A549 (cell line): ENCODE measurements at regions of chr19 and their contacts with region 1.

Region 1: DNA sequence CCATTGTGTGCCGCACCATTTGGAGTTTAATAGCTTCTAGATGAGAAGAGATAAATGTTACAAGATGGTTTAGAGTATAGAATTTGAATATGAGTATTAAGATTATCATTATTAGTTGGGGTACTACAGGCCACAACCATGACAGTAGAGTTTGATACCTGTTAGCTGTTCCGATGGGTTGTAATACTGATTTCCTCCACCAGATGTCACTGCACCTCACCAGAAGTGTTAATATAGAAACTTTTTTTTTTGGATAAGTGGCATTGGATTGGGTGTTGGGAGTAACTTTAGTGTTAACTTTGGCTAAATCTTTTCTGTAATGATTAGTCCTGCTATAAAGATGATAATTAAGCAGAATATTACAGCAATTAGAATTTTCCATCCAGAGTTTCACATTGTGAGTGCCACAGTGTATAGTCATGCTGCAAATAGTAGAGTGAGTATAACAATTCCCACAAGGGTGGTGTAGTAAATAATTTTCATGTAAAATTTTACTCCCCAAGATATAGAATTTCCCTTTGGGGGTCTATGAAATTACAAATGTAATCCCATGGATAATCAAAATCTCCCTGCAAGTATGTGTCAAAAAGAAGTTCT is 56.3 kb downstream of the PSG3 start:
- DNase-seq: peak; percentile 54 to 63
- ATAC-seq: peak in 1 of 2 experiments; percentile 70; a peak in 3 of 6 replicates
- H3K4me3 ChIP-seq: no peak overlapping the region
- H3K27ac ChIP-seq: no peak overlapping the region
- H3K4me1 ChIP-seq: no peaks in the 10 kb centered on the region
- CTCF ChIP-seq: peak; percentile 88
- EP300 ChIP-seq: no peak
- POLR2A ChIP-seq: no peak
- RAD21 ChIP-seq: peak; percentile 64 to 79

Region 2: DNA sequence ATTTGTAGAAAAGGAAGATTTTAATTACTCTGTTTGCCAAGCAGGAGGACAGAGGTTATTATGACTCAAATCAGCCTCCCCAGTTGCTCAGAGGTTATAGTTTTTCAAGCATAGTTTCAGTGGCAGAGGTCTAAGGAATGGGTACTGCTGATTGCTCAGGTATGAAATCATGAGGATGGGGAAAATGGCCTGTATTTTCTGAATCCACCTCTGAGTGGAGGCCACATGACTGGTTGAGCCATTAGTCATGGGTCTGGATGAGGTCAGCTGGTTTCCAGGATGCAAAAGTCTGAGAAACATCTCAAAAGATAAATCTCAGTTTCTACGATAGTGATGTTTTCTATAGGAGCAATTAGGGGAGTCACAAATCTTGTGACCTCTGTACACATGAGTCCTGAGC is 26.5 kb before region 1 on chr19:
- CTCF ChIA-PET with region 1: interaction called, 13 read pairs
- POLR2A ChIA-PET with region 1: no interaction called
- DNase-seq: no peak
- ATAC-seq: no peak
- H3K4me3 ChIP-seq: no peak overlapping the region
- H3K27ac ChIP-seq: no peak overlapping the region
- H3K4me1 ChIP-seq: no peaks in the 10 kb centered on the region
- CTCF ChIP-seq: no peak
- EP300 ChIP-seq: no peak
- POLR2A ChIP-seq: no peak
- RAD21 ChIP-seq: no peak

Region 3: DNA sequence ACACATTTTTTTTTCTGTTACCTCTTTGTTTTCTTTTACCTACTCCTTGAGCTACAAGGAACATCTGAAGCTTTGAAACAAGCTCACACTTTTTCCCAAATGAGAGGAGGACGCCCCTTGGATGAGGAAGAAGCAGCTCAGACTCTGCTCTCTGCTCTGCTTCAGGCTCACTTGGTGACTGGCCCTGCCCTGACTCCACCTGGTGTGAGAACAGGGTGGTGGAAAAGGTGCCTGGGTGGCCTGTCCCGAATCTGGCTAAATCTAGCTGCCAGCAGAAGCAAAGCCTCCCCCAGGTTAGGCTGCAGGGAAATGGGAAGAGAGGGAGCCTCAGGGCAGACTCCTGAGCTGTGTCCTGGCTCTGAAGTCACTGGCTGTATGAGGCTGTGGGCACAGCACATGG is 21.3 kb before region 1 on chr19:
- CTCF ChIA-PET with region 1: interaction called, 10 read pairs
- POLR2A ChIA-PET with region 1: no interaction called
- DNase-seq: no peak
- ATAC-seq: peak in 1 of 2 experiments; percentile 53; a peak in 3 of 6 replicates
- H3K4me3 ChIP-seq: no peak overlapping the region
- H3K27ac ChIP-seq: no peak overlapping the region
- H3K4me1 ChIP-seq: no peaks in the 10 kb centered on the region
- CTCF ChIP-seq: no peak
- EP300 ChIP-seq: no peak
- POLR2A ChIP-seq: no peak
- RAD21 ChIP-seq: no peak